Pancreas (tissue), 10 donors: ENCODE measurements at regions of chr12 and their contacts with region 1.

Region 1: GRCh38 chr12:1804545-1805332 is 15.6 kb upstream of the LRTM2 start:
- DNase-seq: peak; percentile 64 to 81 (median 69)
- ATAC-seq: peak; percentile 76 to 96 (median 88)
- H3K4me3 ChIP-seq: no peak overlapping the region
- H3K27ac ChIP-seq: no peak overlapping the region
- H3K4me1 ChIP-seq: no peaks in the 10 kb centered on the region
- H3K27me3 ChIP-seq: no peaks in the 10 kb centered on the region
- CTCF ChIP-seq: no peak

Region 2: GRCh38 chr12:1920971-1921370 is 116.2 kb after region 1 on chr12:
- intact Hi-C with region 1: loop called in 2 of 3 experiments (anchors 5 to 10 kb)
- DNase-seq: no peak
- ATAC-seq: peak in 2 of 4 donors; percentile 56 to 57
- H3K4me3 ChIP-seq: no peak overlapping the region
- H3K27ac ChIP-seq: no peak overlapping the region
- H3K4me1 ChIP-seq: no peaks in the 10 kb centered on the region
- H3K27me3 ChIP-seq: no peaks in the 10 kb centered on the region
- CTCF ChIP-seq: no peak

Region 3: GRCh38 chr12:1927751-1928351 is 123.1 kb after region 1 on chr12:
- intact Hi-C with region 1: loop called in 2 of 3 experiments (anchors 5 to 10 kb)
- DNase-seq: peak in 2 of 6 donors; percentile 5 to 10
- ATAC-seq: no peak
- H3K4me3 ChIP-seq: no peak overlapping the region
- H3K27ac ChIP-seq: no peak overlapping the region
- H3K4me1 ChIP-seq: no peaks in the 10 kb centered on the region
- H3K27me3 ChIP-seq: no peaks in the 10 kb centered on the region
- CTCF ChIP-seq: no peak

Region 4: DNA sequence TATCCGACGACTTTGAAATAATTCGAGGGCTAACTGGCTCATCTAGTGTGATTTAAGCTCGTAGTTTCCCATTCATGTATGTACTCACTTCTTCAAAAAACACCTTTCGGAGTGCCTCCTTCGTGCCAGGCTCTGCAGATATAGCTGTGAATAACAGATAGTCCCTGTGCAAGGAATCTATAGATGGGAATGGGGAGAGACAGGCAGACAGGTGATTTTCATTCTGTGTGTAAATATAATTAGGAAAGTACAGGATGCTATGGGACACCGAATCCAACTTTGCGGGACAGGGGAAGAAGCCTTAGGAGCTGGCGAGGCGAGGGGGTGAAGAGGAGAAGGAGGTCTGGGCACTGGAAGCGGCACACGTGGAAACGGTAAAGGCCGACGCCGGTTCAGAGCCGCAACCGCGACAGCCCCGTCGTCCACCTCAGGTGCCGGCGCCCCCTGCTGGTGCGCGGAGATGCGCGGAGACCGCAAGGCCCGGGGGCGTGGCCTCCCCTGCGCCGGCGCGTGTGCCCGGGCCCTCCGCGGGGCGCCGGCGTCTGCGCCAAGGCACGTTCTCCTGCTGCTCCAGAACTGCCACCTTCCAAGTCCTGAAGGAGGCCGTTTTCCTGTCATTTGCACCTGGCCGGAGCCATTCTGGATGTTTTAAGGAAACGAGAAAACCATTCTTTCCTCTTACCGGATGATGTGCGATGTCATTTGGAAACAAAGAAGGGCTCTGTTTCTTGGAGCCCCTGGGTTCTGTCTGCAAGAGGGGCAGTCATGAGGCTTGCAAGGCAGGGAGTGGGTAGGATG is 230.1 kb after region 1 on chr12:
- intact Hi-C with region 1: loop called in 1 of 3 experiments (anchors 10 kb)
- DNase-seq: peak; percentile 74 to 99 (median 88)
- ATAC-seq: peak; percentile 99 to 100 (median 99)
- H3K4me3 ChIP-seq: peak overlapping the region in 2 of 4 donors; percentile 3 to 39
- H3K27ac ChIP-seq: no peak overlapping the region
- H3K4me1 ChIP-seq: no peaks in the 10 kb centered on the region
- H3K27me3 ChIP-seq: no peaks in the 10 kb centered on the region
- CTCF ChIP-seq: peak; percentile 93 to 97 (median 96)